ENCODE measurements at regions of chr6 and their contacts with region 1.

Region 1: DNA sequence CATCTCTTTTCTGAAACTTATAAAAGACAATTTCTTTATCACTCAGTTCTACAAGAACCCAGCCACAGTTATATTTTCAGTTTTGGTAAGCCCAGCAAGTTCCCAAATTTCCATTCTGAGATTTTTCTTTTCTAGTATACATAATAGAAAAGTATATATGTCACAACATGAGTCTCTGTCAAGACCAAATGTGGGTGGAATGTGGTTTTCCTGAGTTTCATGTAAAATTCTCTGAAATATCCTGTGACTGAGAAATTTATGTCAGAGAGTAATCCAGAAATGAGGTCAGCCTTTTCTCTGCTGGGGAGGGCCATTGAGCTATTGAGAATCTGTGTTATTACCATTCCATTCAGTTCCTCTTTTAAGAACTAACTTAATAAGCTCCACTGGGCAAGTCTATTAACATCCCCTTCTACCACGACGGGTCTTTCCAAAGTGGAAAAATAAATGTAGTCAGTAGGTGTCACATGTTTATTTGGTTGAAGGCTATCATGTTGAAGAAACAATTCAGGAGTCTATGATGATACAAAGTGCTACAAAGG is 100.7 kb upstream of the HMGN3 start:
- DNase-seq: no peak
- H3K4me3 Mint-ChIP-seq: no peak overlapping the region
- H3K27ac Mint-ChIP-seq: no peak overlapping the region
- H3K4me1 Mint-ChIP-seq: peaks cover 9% of the 10 kb centered on the region
- H3K27me3 Mint-ChIP-seq: peaks cover 5% of the 10 kb centered on the region

Region 2: GRCh38 chr6:79034865-79035264 is 300.3 kb before region 1 on chr6:
- intact Hi-C with region 1: loop called (anchors 2 kb)
- DNase-seq: no peak
- H3K4me3 Mint-ChIP-seq: peak overlapping the region; percentile 1
- H3K27ac Mint-ChIP-seq: peak overlapping the region; percentile 56
- H3K4me1 Mint-ChIP-seq: peaks cover 35% of the 10 kb centered on the region
- H3K27me3 Mint-ChIP-seq: no peaks in the 10 kb centered on the region

Region 3: GRCh38 chr6:79233611-79234149 is 101.5 kb before region 1 on chr6:
- intact Hi-C with region 1: loop called (anchors 1 kb)
- DNase-seq: peak; percentile 93
- H3K4me3 Mint-ChIP-seq: peak overlapping the region; percentile 92
- H3K27ac Mint-ChIP-seq: peak overlapping the region; percentile 94
- H3K4me1 Mint-ChIP-seq: peaks cover 21% of the 10 kb centered on the region
- H3K27me3 Mint-ChIP-seq: peaks cover 2% of the 10 kb centered on the region

Region 4: DNA sequence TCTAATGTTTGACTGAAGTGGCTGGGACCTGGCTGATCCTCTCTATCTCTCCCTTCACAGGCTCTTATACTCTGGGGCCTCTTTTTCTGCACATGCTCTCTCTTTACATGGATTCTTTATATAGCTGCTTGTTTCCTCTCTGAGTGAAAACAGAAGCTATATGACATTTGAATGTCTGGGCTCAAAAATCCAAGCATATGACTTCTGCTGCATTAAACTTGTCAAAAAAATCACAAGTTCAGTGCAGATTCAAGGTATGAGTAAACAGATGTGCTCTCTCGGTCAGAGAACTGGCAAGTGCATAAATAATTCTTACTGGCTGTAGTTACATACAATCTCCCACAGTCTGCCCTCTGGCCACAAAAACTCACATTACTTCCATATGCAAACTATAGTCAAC is 105.4 kb after region 1 on chr6:
- intact Hi-C with region 1: no loop called
- DNase-seq: no peak
- H3K4me3 Mint-ChIP-seq: no peak overlapping the region
- H3K27ac Mint-ChIP-seq: no peak overlapping the region
- H3K4me1 Mint-ChIP-seq: no peaks in the 10 kb centered on the region
- H3K27me3 Mint-ChIP-seq: no peaks in the 10 kb centered on the region

Region 5: GRCh38 chr6:79453558-79454042 is 118.4 kb after region 1 on chr6:
- intact Hi-C with region 1: loop called (anchors 5 kb)
- DNase-seq: no peak
- H3K4me3 Mint-ChIP-seq: no peak overlapping the region
- H3K27ac Mint-ChIP-seq: no peak overlapping the region
- H3K4me1 Mint-ChIP-seq: no peaks in the 10 kb centered on the region
- H3K27me3 Mint-ChIP-seq: no peaks in the 10 kb centered on the region

Region 6: GRCh38 chr6:80163658-80164187 is 828.5 kb after region 1 on chr6:
- intact Hi-C with region 1: loop called (anchors 10 kb)
- DNase-seq: peak; percentile 73
- H3K4me3 Mint-ChIP-seq: no peak overlapping the region
- H3K27ac Mint-ChIP-seq: no peak overlapping the region
- H3K4me1 Mint-ChIP-seq: peaks cover 15% of the 10 kb centered on the region
- H3K27me3 Mint-ChIP-seq: no peaks in the 10 kb centered on the region